HepG2 (cell line): ENCODE measurements at regions of chr2 and their contacts with region 1.

Region 1: GRCh38 chr2:48221846-48222516 is 308.0 kb upstream of the STON1 start:
- DNase-seq: peak; percentile 99
- ATAC-seq: peak; percentile 77
- H3K4me3 ChIP-seq: no peak overlapping the region
- H3K27ac ChIP-seq: peak overlapping the region; percentile 81
- H3K4me1 ChIP-seq: peaks cover 60% of the 10 kb centered on the region
- H3K27me3 ChIP-seq: no peaks in the 10 kb centered on the region
- CTCF ChIP-seq: peak; percentile 26; the same call in 1 of the 2 replicates
- EP300 ChIP-seq: peak; percentile 97 to 100
- POLR2A ChIP-seq: no peak; a peak in 1 of 4 replicates
- RAD21 ChIP-seq: peak; percentile 51; the same call in 1 of the 2 replicates

Region 2: GRCh38 chr2:48205137-48205798 is 16.7 kb before region 1 on chr2:
- CTCF ChIA-PET with region 1: no interaction called
- POLR2A ChIA-PET with region 1: interaction called, 7 read pairs
- in situ Hi-C with region 1: no loop called
- intact Hi-C with region 1: loop called (anchors 1 kb)
- DNase-seq: peak; percentile 97
- ATAC-seq: peak; percentile 97
- H3K4me3 ChIP-seq: peak overlapping the region; percentile 26 to 55 (median 34)
- H3K27ac ChIP-seq: peak overlapping the region; percentile 71
- H3K4me1 ChIP-seq: peaks cover 74% of the 10 kb centered on the region
- H3K27me3 ChIP-seq: no peaks in the 10 kb centered on the region
- CTCF ChIP-seq: peak; percentile 57
- EP300 ChIP-seq: peak in 1 of 2 experiments; percentile 66; a peak in 2 of 4 replicates
- POLR2A ChIP-seq: peak in 1 of 2 experiments; percentile 46; a peak in 1 of 4 replicates
- RAD21 ChIP-seq: peak; percentile 68; the same call in 1 of the 2 replicates

Region 3: DNA sequence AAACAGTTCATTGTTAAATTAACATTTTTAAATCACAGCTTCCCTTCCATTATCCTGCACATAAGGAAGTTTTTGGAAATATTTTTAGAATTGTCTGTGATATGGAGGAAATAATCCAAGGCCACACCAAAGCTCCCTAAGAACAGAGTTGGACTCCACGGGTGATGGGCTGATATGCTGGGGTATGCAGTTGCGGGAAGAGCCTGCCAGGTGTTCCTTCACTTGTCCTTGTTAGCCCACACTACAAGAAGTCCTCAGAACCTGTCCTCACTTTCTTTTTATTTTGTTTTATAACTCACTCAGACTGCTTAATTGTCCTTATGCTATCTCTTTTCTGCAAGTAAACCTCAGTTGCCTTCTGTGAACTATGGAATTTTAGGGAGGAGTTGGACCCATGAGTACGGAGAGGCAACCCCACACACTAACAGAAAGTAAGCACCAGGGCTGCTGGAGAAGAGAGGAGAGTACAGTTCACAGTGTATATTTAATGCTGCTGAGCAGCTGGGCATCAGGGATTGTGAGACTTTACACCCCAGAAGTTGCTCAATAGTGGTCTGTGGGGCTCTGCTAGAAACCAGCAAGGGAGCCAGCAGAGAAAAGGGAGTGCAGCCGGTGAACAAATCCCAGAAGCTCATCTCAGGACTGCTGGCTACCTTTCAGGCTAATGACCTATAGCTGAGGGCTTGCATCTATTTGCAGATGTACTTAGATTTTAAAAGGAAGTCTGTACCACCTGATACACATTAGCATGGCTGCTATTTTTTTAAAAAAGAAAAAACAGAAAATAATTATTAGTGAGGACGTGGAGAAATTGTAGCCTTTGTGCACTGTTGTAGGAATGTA is 27.9 kb after region 1 on chr2:
- CTCF ChIA-PET with region 1: no interaction called
- POLR2A ChIA-PET with region 1: interaction called, 4 read pairs
- in situ Hi-C with region 1: no loop called
- intact Hi-C with region 1: loop called (anchors 1 kb)
- DNase-seq: peak; percentile 89
- ATAC-seq: peak; percentile 98
- H3K4me3 ChIP-seq: peak overlapping the region in 2 of 3 experiments; percentile 3 to 28; a peak in 1 of 6 replicates
- H3K27ac ChIP-seq: peak overlapping the region; percentile 59
- H3K4me1 ChIP-seq: peaks cover 59% of the 10 kb centered on the region
- H3K27me3 ChIP-seq: no peaks in the 10 kb centered on the region
- CTCF ChIP-seq: no peak
- EP300 ChIP-seq: peak in 1 of 2 experiments; percentile 83; a peak in 2 of 4 replicates
- POLR2A ChIP-seq: no peak
- RAD21 ChIP-seq: peak; percentile 55

Region 4: DNA sequence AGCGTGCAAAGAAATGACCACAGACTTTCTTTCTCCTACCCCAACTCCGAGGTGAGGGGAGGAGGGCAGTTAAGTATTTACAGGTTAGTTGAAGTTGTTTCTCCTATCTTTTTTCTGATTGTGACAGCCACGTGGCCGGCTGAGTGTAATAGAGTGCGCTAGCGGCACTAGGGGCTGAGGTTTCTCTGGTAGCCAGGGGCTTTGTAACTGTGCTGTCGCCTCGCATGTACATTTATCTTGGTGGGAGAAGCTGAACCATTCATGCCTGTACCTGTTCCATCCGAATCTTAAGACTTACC is 93.9 kb after region 1 on chr2:
- CTCF ChIA-PET with region 1: no interaction called
- POLR2A ChIA-PET with region 1: no interaction called
- in situ Hi-C with region 1: no loop called
- intact Hi-C with region 1: no loop called
- DNase-seq: peak; percentile 52
- ATAC-seq: peak; percentile 25
- H3K4me3 ChIP-seq: peak overlapping the region; percentile 66 to 98 (median 76)
- H3K27ac ChIP-seq: peak overlapping the region; percentile 84
- H3K4me1 ChIP-seq: peaks cover 62% of the 10 kb centered on the region
- H3K27me3 ChIP-seq: no peaks in the 10 kb centered on the region; a peak in 1 of 5 replicates
- CTCF ChIP-seq: peak; percentile 10; the same call in 1 of the 2 replicates
- EP300 ChIP-seq: no peak
- POLR2A ChIP-seq: no peak
- RAD21 ChIP-seq: no peak

Region 5: DNA sequence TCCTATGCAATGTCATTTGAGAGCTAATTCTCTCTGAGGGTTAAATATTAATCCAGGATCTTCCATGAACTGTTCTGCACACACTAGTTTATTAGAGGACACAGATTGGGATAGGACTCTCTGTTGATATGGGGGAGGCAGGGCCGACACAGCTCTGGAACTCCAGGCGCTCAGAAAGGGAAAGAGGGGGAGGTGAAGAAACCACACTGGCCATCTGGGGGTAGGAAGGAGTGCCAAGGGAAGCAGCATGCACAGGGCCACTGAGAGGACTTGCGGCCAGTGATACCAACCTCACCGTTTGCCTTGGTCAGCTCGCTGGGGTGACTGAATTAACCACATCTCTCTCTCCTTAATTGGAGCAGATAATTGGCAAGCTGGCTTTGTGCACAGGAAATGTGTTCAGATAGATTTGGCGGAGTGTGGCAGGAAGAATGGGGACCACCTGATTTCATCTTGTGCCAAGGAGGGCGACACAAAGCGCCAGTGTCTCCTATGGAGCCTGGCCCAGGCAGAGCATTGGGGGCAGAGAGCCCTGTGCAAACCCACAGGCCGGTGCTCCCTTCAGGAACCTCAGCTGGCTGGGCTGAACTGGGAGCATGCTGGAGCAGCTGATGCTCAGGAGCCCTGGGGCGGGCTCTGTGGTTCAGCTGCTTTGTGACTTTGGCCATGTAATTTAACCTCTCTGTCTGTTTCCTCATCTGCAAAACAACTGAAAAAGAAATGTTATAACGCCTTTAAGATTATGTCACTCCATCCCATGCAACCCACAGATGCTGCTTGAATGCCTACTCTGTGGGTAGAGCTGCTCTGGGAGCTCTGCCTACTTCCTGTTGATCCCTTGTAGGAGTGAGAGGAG is 193.2 kb after region 1 on chr2:
- CTCF ChIA-PET with region 1: no interaction called
- POLR2A ChIA-PET with region 1: interaction called, 3 read pairs
- in situ Hi-C with region 1: loop called (anchors 25 kb)
- intact Hi-C with region 1: loop called (anchors 5 kb)
- DNase-seq: peak; percentile 79
- ATAC-seq: peak; percentile 80
- H3K4me3 ChIP-seq: peak overlapping the region; percentile 32 to 68 (median 53)
- H3K27ac ChIP-seq: peak overlapping the region; percentile 80
- H3K4me1 ChIP-seq: peaks cover 77% of the 10 kb centered on the region
- H3K27me3 ChIP-seq: no peaks in the 10 kb centered on the region
- CTCF ChIP-seq: 0 out of 2 replicates have a peak, but pooled peaks have one; percentile 4
- EP300 ChIP-seq: peak in 1 of 2 experiments; percentile 41; a peak in 2 of 4 replicates
- POLR2A ChIP-seq: peak; percentile 59 to 83
- RAD21 ChIP-seq: no peak